HEK293 (cell line): ENCODE measurements at regions of chr10 and their contacts with region 1.

Region 1: GRCh38 chr10:74967911-74968645 is 141.7 kb downstream of the KAT6B start:
- H3K4me3 ChIP-seq: peak overlapping the region; percentile 11; the same call in 1 of the 2 replicates
- H3K27ac ChIP-seq: peak overlapping the region; percentile 92
- H3K4me1 ChIP-seq: peaks cover 16% of the 10 kb centered on the region
- CTCF ChIP-seq: no peak

Region 2: DNA sequence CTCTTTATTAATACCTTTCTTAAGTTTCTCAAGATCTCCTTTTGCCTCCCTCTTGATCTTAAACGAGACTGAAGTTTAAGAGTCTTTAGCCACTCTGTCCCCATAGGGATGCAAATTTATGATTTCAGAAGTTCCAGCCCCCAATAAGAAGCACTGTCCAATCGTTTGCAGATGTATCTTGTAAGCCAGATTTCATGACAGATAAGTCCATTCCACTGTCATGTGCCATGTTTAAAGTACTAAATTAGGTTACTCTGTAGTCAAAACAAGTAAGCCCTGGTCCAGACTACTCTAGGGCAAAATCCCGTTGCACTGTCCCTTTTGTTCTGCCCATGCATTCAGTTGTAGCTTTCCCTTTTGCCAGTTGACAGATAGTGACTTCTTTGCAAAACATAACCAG is 298.9 kb before region 1 on chr10:
- CTCF ChIA-PET with region 1: no interaction called
- POLR2A ChIA-PET with region 1: interaction called, 13 read pairs
- H3K4me3 ChIP-seq: no peak overlapping the region
- H3K27ac ChIP-seq: no peak overlapping the region
- H3K4me1 ChIP-seq: no peaks in the 10 kb centered on the region
- CTCF ChIP-seq: no peak